Vagina (tissue), 2 donors: ENCODE measurements at regions of chr2 and their contacts with region 1.

Region 1: DNA sequence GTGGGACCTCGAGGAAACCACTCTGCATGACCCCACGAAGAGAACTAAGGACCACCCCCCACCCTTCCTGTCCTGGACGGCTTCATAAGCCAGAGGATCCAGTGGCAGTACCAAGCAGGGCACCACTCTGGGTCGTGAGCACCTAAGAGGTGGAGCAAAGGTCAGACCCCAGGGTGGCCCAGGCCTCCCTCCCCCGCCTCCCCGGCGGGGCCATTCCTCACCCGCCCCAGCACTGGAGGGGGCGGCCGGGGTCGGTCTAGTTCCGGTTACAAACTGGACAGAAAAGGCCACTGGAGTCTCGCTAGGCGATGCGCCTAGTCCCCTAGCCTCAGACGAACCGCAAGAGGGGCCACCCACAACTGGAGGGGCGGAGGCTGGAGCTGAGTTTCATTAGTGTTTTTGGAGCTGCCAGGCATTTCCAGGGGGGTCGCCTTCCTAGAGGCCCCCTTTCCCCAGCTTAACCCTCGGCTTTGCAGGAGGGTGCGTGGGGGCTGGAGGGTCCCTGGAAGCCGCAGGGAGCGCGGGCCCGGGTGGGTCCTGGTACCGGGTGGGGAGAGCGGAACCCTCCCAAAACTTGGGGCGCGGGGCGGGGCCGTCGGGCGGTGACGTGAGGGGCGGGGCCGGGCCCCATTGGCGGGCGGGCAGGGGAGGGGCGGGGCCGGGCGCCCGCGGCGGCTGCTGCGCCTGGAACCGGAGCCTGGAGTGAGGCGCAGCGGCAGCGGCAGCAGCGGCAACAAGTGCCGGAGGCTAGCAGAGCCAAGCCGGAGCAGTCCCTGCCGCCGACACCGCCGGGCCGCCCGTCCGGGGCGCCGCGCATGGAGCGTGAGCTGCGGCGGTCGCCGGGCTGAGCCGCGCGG is at the start of gene B3GNT2:
- DNase-seq: no peak
- H3K4me3 ChIP-seq: peak within 1 kb of the TSS; percentile 93 to 94
- H3K27ac ChIP-seq: peak within 1 kb of the TSS; percentile 97
- H3K4me1 ChIP-seq: peaks cover 38% of the 10 kb centered on the region
- H3K27me3 ChIP-seq: no peaks in the 10 kb centered on the region
- CTCF ChIP-seq: no peak
- POLR2A ChIP-seq: peak in 1 of 2 donors; percentile 67
- total RNA-seq, gene B3GNT2: 18.9 TPM

Region 2: GRCh38 chr2:61905372-61906185 is 290.1 kb before region 1 on chr2 and contains the start of gene COMMD1:
- intact Hi-C with region 1: no loop called
- DNase-seq: peak in 1 of 2 donors; percentile 90
- H3K4me3 ChIP-seq: peak within 1 kb of the TSS; percentile 82 to 85
- H3K27ac ChIP-seq: peak within 1 kb of the TSS; percentile 71
- H3K4me1 ChIP-seq: peaks cover 19% of the 10 kb centered on the region
- H3K27me3 ChIP-seq: no peaks in the 10 kb centered on the region
- CTCF ChIP-seq: peak in 1 of 3 experiments; percentile 17
- POLR2A ChIP-seq: peak in 1 of 2 donors; percentile 15
- total RNA-seq, gene COMMD1: 43.0 TPM

Region 3: DNA sequence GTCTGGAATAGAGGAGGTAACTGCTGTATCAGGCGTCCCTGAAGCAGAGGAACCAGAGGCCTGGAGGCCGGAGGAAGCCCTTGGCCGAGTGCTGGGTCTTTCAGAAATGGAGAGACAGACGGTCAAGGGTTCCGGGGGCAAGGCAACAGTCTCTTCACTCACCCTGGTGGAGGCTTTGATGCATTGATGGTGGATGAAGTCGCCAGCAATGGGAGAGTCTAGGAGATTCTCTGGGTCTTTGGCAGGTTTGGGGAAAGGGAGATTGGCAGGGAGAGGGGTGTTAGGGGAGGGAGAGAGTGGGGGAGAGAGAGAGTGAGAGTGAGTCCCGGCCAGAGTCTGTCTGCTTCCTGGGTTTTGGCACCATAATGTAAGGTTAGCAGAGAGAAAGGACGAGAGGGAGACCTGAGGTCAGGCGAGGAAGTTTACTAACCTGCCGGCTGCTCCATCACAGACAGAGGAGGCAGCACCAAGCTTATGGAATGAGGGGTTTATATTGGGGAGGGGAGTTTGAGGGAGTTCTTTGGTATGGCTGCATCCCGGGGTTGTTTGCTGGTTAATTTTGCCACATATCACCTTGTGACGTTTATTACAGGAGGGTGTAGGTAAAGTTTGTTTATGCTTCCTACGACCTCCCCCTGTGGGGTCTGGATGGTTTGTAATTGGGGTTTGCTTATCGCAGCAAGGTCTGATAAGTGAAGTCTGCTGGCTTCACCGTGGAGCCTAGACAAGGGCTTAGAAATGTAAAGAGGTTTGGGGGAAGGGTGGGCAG is 270.6 kb before region 1 on chr2:
- intact Hi-C with region 1: loop called (anchors 5 kb)
- DNase-seq: no peak
- H3K4me3 ChIP-seq: no peak overlapping the region
- H3K27ac ChIP-seq: no peak overlapping the region
- H3K4me1 ChIP-seq: no peaks in the 10 kb centered on the region
- H3K27me3 ChIP-seq: no peaks in the 10 kb centered on the region
- CTCF ChIP-seq: no peak
- POLR2A ChIP-seq: no peak

Region 4: GRCh38 chr2:62217970-62218369 is 22.3 kb after region 1 on chr2:
- intact Hi-C with region 1: loop called (anchors 2 kb)
- DNase-seq: no peak
- H3K4me3 ChIP-seq: no peak overlapping the region
- H3K27ac ChIP-seq: peak overlapping the region; percentile 87
- H3K4me1 ChIP-seq: peaks cover 78% of the 10 kb centered on the region
- H3K27me3 ChIP-seq: no peaks in the 10 kb centered on the region
- CTCF ChIP-seq: no peak
- POLR2A ChIP-seq: no peak

Region 5: GRCh38 chr2:62768615-62769014 is 573.0 kb after region 1 on chr2:
- intact Hi-C with region 1: loop called (anchors 5 kb)
- DNase-seq: no peak
- H3K4me3 ChIP-seq: no peak overlapping the region
- H3K27ac ChIP-seq: no peak overlapping the region
- H3K4me1 ChIP-seq: peaks cover 12% of the 10 kb centered on the region
- H3K27me3 ChIP-seq: no peaks in the 10 kb centered on the region
- CTCF ChIP-seq: no peak
- POLR2A ChIP-seq: no peak